ENCODE measurements at regions of chr7 and their contacts with region 1.

Region 1: GRCh38 chr7:139714163-139714901 is 63.5 kb downstream of the HIPK2 start:
- DNase-seq: no peak
- H3K4me3 ChIP-seq: no peak overlapping the region
- H3K27ac ChIP-seq: no peak overlapping the region
- H3K4me1 ChIP-seq: peaks cover 2% of the 10 kb centered on the region
- H3K27me3 ChIP-seq: no peaks in the 10 kb centered on the region
- CTCF ChIP-seq: no peak
- EP300 ChIP-seq: no peak
- POLR2A ChIP-seq: no peak

Region 2: GRCh38 chr7:139783647-139784385 is 69.5 kb after region 1 on chr7:
- intact Hi-C with region 1: loop called in 1 of 4 experiments (anchors 10 kb)
- DNase-seq: no peak
- H3K4me3 ChIP-seq: no peak overlapping the region
- H3K27ac ChIP-seq: no peak overlapping the region
- H3K4me1 ChIP-seq: peaks cover 2% of the 10 kb centered on the region
- H3K27me3 ChIP-seq: no peaks in the 10 kb centered on the region
- CTCF ChIP-seq: no peak
- EP300 ChIP-seq: no peak
- POLR2A ChIP-seq: no peak